Naive thymus-derived CD4-positive, alpha-beta T cell (primary cell): ENCODE measurements at regions of chr16 and their contacts with region 1.

Region 1: GRCh38 chr16:23570992-23571632 is 13.6 kb downstream of the UBFD1 start:
- DNase-seq: no peak
- ATAC-seq: peak; percentile 78
- H3K4me3 ChIP-seq: no peak overlapping the region
- H3K4me3 Mint-ChIP-seq: no peak overlapping the region
- H3K27ac ChIP-seq: no peak overlapping the region
- H3K27ac Mint-ChIP-seq: peak overlapping the region in 1 of 9 donors; percentile 48
- H3K4me1 ChIP-seq: no peaks in the 10 kb centered on the region
- H3K4me1 Mint-ChIP-seq: peaks cover 0 to 5% (median 0%) of the 10 kb centered on the region in 7 donors
- H3K27me3 ChIP-seq: no peaks in the 10 kb centered on the region
- H3K27me3 Mint-ChIP-seq: no peaks in the 10 kb centered on the region

Region 2: GRCh38 chr16:23504451-23505179 is 66.5 kb before region 1 on chr16:
- CTCF ChIA-PET with region 1: no interaction called
- POLR2A ChIA-PET with region 1: no interaction called
- intact Hi-C with region 1: no loop called
- DNase-seq: peak in 1 of 9 donors; percentile 72
- ATAC-seq: peak; percentile 90
- H3K4me3 ChIP-seq: no peak overlapping the region
- H3K4me3 Mint-ChIP-seq: peak overlapping the region in 5 of 10 donors; percentile 10 to 71 (median 46)
- H3K27ac ChIP-seq: no peak overlapping the region
- H3K27ac Mint-ChIP-seq: peak overlapping the region in 2 of 9 donors; percentile 14 to 89
- H3K4me1 ChIP-seq: peaks cover 39 to 52% of the 10 kb centered on the region in 2 donors
- H3K4me1 Mint-ChIP-seq: peaks cover 50 to 91% (median 79%) of the 10 kb centered on the region in 7 donors
- H3K27me3 ChIP-seq: no peaks in the 10 kb centered on the region
- H3K27me3 Mint-ChIP-seq: no peaks in the 10 kb centered on the region

Region 3: GRCh38 chr16:23608194-23608593 is 37.1 kb after region 1 on chr16:
- CTCF ChIA-PET with region 1: no interaction called
- POLR2A ChIA-PET with region 1: no interaction called
- intact Hi-C with region 1: loop called in 1 of 2 experiments (anchors 5 kb)
- DNase-seq: no peak
- ATAC-seq: no peak
- H3K4me3 ChIP-seq: no peak overlapping the region
- H3K4me3 Mint-ChIP-seq: no peak overlapping the region
- H3K27ac ChIP-seq: no peak overlapping the region
- H3K27ac Mint-ChIP-seq: peak overlapping the region in 1 of 9 donors; percentile 60
- H3K4me1 ChIP-seq: no peaks in the 10 kb centered on the region
- H3K4me1 Mint-ChIP-seq: peaks cover 0 to 2% (median 0%) of the 10 kb centered on the region in 7 donors
- H3K27me3 ChIP-seq: no peaks in the 10 kb centered on the region
- H3K27me3 Mint-ChIP-seq: no peaks in the 10 kb centered on the region